Breast epithelium (tissue), 4 donors: ENCODE measurements at regions of chr5 and their contacts with region 1.

Region 1: DNA sequence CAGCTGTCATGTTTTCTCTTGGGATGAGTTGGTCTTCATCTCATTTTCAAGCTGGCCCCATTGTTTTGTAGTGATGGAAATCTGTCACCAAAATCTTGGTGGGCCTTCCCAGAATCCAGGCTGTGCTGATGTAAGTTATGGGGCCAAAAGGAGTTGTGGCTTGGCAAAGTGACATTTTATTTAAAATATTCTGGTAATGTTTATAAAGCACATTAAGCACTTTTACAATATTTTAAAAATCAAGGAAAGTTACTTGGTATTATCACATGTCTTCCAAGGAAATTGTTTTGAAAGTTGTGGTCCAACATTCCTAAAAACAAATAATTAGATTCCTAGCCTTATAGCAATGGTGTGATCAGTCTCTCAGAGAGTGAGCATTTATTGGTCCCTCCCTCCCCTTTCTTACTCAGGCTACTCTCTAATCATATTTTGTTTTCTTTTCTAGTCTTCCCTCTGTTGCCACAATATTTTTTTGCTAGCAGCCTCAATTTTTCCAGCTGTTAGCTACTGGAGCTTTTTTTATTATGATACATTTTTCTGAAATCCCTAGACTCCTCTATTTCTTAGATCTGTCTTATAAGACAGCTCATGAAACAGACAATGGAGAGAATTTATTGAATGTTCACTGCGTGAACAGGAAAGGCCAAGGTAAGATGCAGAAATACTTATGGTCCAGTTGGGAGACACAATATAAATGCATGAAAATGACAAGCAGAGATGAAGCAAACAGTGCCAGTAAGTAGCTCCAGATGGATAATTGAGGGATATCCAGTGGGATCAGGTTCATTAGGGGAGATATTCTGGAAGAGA is 408.1 kb upstream of the ZNF608 start:
- DNase-seq: no peak
- H3K4me3 ChIP-seq: no peak overlapping the region
- H3K27ac ChIP-seq: no peak overlapping the region
- H3K4me1 ChIP-seq: no peaks in the 10 kb centered on the region
- H3K27me3 ChIP-seq: no peaks in the 10 kb centered on the region
- CTCF ChIP-seq: no peak
- POLR2A ChIP-seq: no peak

Region 2: GRCh38 chr5:124371111-124371706 is 783.3 kb before region 1 on chr5:
- intact Hi-C with region 1: loop called (anchors 5 kb)
- DNase-seq: no peak
- H3K4me3 ChIP-seq: no peak overlapping the region
- H3K27ac ChIP-seq: no peak overlapping the region
- H3K4me1 ChIP-seq: no peaks in the 10 kb centered on the region
- H3K27me3 ChIP-seq: no peaks in the 10 kb centered on the region
- CTCF ChIP-seq: no peak
- POLR2A ChIP-seq: no peak

Region 3: GRCh38 chr5:125176009-125176477 is 21.5 kb after region 1 on chr5:
- intact Hi-C with region 1: no loop called
- DNase-seq: no peak
- H3K4me3 ChIP-seq: no peak overlapping the region
- H3K27ac ChIP-seq: no peak overlapping the region
- H3K4me1 ChIP-seq: no peaks in the 10 kb centered on the region
- H3K27me3 ChIP-seq: no peaks in the 10 kb centered on the region
- CTCF ChIP-seq: no peak
- POLR2A ChIP-seq: no peak